ENCODE measurements at regions of chr4 and their contacts with region 1.

Region 1: DNA sequence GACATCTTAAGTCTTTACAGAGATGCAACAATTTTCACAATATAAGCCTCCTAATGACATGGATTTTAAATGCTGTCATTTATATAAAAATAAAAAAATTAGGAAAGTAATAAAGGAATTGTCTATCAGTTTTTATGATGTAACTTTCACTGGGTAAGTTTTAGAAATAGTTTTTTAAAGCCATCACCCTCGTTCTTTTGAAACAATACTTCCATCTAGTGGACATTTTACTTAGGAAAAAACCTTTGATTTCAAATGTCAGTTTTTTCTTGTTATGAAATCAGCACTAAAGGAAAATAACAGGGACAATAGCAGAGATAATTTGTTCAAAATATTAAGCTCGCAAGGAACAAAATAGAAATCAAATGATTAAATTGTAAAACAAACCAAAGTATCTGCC is 24.3 kb upstream of the NDNF start:
- DNase-seq: no peak
- H3K4me3 ChIP-seq: no peak overlapping the region
- H3K27ac ChIP-seq: no peak overlapping the region
- H3K27me3 ChIP-seq: no peaks in the 10 kb centered on the region
- CTCF ChIP-seq: peak; percentile 40 to 88 (median 68)

Region 2: DNA sequence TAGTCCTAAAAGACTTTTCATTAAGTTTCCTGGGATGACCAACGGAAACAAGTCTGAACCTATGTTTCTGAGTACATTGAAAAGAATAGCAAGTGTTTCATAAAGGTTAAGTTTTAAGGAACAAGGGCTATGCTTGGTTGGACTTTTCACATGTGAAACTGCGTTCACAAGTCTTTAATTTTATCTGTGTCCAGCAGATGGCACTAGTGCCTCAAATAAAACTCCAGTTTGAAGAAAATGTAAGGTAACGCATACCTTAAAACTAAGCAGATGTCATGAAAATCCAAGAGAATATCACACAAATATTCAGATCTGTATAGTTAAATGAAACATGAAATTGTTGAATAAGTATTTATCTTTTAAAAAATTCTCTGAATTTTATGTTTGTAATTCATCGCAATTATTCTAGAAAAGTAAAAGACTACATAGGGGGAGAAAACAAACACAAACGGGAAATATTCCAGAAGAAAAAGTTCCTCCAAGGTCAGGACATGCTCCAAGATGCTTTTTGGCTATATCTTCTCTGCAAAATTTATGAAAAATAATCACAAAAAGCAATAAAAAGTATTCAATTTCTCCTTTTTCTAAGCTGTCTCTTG is 940.4 kb before region 1 on chr4:
- intact Hi-C with region 1: loop called (anchors 5 kb)
- DNase-seq: no peak
- H3K4me3 ChIP-seq: peak overlapping the region in 1 of 59 donors; percentile 7
- H3K27ac ChIP-seq: no peak overlapping the region
- H3K27me3 ChIP-seq: no peaks in the 10 kb centered on the region
- CTCF ChIP-seq: peak; percentile 68 to 92 (median 78)

Region 3: GRCh38 chr4:120718979-120719566 is 377.6 kb before region 1 on chr4:
- intact Hi-C with region 1: loop called (anchors 5 to 10 kb)
- DNase-seq: no peak
- H3K4me3 ChIP-seq: no peak overlapping the region
- H3K27ac ChIP-seq: no peak overlapping the region
- H3K27me3 ChIP-seq: no peaks in the 10 kb centered on the region
- CTCF ChIP-seq: peak in 53 of 56 donors; percentile 16 to 73 (median 45)

Measured in dorsolateral prefrontal cortex (tissue), 120 donors.